Psoas muscle (tissue), 8 donors: ENCODE measurements at regions of chr5 and their contacts with region 1.

Region 1: DNA sequence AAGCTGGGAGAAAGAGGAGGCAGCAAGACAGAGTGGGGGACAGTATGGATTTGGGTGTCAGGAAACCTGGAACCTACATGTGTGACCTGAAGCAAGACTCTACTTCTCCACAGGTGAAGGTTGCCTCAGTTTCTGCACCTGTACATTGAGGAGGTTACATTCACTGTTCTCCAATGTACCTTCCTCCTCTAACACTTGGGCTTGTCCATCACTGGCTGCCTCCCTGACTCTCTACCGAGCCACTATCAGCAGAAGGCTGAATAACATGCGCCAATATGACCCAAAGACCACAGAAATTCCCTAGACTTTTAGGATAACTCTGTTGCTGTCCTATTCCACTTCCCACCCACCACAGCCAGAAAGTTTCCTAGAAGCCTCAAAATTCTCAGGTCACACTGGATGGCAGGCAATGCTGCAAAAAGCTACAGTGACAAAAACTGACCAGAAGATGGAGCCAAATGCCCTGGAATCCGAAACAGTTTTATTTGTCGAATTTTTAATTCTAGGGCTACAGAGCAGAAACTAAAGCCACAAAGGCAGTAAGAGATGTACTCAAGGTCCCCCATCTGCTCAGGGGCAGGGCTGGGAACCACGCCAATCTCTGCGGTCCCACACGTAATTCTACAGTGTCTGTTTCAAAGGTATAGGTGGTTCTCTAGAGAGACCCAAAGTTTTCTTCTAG is 64.4 kb downstream of the FAM114A2 start:
- DNase-seq: no peak
- ATAC-seq: peak in 1 of 4 donors; percentile 55
- H3K4me3 ChIP-seq: no peak overlapping the region
- H3K27ac ChIP-seq: no peak overlapping the region
- H3K4me1 ChIP-seq: no peaks in the 10 kb centered on the region
- H3K27me3 ChIP-seq: no peaks in the 10 kb centered on the region
- CTCF ChIP-seq: peak; percentile 68

Region 2: DNA sequence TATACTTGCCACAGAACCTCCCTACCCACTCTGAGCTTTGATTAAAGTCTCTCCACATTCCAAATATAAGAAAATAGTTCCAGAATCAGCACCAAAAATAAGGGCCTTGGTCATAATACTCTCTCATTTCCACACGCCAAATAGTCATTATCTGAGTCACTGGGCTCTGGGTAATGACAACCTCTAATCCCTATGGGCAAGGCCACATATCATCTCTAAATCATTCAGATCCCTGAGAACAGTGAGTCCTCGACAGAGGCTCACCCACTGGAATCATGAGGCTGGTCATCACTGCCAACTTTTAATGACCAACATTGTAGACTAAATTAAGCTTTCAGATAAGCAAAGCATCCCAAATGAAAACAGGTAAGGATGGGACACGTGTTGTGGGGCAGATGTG is 36.4 kb after region 1 on chr5:
- intact Hi-C with region 1: no loop called
- DNase-seq: no peak
- ATAC-seq: peak in 3 of 4 donors; percentile 82 to 93 (median 87)
- H3K4me3 ChIP-seq: no peak overlapping the region
- H3K27ac ChIP-seq: no peak overlapping the region
- H3K4me1 ChIP-seq: no peaks in the 10 kb centered on the region
- H3K27me3 ChIP-seq: no peaks in the 10 kb centered on the region
- CTCF ChIP-seq: no peak

Region 3: DNA sequence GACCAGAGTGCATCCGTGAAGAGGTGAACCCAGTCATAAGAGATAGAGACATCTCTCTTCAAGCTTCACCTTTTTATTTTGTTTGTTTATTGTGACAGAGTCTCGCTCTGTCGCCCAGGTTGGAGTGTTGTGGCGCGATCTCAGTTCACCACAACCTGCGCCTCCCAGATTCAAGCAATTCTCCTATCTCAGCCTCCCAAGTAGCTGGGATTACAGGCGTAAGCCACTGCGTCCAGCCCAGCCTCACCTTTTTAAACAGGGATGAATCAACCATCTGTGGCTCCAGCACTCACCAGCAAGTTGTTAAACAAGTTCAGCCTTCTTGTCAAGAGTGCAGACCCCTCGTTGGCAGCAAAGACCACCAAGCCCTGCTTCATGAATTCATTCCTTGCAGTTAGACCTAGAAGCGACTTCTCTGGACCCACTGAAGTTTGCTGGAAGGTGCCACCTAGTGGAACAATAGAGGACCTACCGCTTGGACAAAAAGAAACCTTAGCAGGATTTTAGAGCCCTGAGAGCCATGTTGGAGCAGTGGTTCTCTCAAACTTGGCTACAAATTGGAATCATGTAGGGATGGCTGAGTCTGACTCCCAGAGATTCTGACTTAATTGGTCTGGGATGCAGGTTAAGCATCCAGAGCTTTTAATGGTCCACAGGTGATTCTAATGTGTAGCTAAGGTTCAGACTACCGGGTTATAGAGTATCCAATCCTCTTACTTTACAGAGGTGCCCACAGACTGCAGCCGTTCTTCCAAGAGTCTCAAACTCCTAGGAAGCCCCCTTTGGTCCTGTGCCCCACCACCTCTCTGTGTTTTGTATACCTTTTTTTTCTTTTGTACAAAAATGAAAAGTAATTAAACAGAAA is 205.8 kb after region 1 on chr5:
- intact Hi-C with region 1: loop called (anchors 5 to 10 kb)
- DNase-seq: no peak
- ATAC-seq: peak; percentile 62 to 87 (median 78)
- H3K4me3 ChIP-seq: no peak overlapping the region
- H3K27ac ChIP-seq: no peak overlapping the region
- H3K4me1 ChIP-seq: no peaks in the 10 kb centered on the region
- H3K27me3 ChIP-seq: no peaks in the 10 kb centered on the region
- CTCF ChIP-seq: peak; percentile 77

Region 4: DNA sequence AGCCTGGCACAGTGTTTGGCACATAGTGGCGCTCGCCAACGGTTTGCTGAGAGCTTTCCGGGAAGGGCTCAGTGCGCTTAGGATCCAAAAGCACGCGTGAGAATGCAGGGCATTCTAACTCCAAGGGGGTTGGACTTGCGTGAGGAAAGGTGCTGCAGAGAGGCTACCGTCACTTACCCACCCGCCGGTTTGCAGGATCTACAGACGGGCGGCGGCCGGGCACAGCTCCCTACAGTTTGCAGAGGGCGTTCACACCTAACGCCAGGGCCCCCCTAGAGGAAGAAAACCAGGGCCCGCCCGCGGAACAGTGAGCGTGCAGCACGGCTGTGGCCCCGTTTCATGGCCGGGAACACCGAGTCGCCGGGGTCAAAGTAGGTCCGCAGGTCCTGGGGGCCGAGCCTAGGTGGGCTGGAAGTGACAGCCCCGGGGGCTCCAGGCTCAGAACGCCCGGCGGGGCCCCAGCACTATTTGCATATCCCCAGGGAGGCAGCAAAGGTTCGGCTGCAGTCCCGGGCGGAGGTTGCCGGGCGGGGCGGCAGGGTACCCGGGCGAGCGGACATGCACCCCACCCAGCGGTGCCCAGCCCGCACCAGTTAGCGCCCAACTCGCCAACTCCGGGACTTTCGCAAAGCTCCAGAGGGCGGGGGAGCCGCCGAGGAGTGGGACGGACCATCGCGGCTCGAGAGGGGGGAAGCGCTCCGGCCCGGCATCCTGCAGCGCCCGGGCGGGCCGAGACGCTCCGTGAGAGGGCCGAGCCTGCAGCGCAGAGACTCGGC is 215.7 kb after region 1 on chr5:
- intact Hi-C with region 1: loop called in 1 of 2 experiments (anchors 10 kb)
- DNase-seq: peak; percentile 90 to 94
- ATAC-seq: peak; percentile 93 to 95 (median 95)
- H3K4me3 ChIP-seq: peak overlapping the region; percentile 86
- H3K27ac ChIP-seq: peak overlapping the region; percentile 78
- H3K4me1 ChIP-seq: peaks cover 29% of the 10 kb centered on the region
- H3K27me3 ChIP-seq: no peaks in the 10 kb centered on the region
- CTCF ChIP-seq: peak; percentile 23

Region 5: DNA sequence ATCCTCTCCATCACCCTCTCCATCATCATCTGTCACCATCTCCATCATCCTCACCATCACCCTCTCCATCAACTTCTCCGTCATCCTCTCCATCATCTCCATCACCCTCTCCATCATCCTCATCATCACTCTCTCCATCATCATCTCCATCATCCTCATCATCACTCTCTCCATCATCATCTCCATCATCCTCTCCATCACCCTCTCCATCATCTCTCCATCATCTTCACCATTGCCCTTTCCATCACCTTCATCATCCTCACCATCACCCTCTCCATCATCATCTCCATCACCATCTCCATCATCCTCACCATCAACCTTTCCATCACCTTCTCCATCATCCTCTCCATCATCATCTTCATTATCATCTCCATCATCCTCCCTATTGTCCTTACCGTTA is 1787.2 kb after region 1 on chr5:
- intact Hi-C with region 1: no loop called
- DNase-seq: no peak
- ATAC-seq: no peak
- H3K4me3 ChIP-seq: no peak overlapping the region
- H3K27ac ChIP-seq: no peak overlapping the region
- H3K4me1 ChIP-seq: peaks cover 3% of the 10 kb centered on the region
- H3K27me3 ChIP-seq: no peaks in the 10 kb centered on the region
- CTCF ChIP-seq: no peak